ENCODE measurements at regions of chrX and their contacts with region 1.

Region 1: DNA sequence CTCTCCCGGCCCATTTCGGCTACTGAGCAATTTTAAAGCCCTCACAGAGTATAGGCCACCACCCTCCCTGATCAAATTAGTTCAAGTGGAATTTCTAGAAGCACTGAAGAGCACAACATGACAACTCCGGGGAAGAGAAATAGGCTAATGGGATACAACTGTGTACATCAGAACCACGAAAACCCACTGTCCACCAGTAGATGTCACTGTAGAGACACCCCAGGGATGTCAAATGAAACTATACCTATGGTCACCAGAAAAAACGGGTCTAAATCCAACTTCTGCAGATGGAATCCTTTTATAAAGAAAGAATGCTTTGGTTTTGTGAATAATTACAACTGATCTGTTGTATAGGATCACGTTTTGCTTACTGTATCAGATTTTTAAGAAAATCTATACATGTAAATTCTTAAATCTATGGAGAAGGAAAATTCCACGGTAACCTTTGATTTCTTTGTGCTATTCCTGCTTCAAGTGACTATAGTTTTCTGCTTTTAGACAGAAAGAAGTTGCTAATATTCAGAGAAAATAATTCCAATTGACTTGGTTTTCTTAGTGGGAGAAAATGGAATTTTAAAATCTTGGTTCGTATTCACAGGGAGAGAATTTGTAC is 29.5 kb upstream of the MAP3K15 start:
- DNase-seq: no peak
- ATAC-seq: peak; percentile 72

Region 2: DNA sequence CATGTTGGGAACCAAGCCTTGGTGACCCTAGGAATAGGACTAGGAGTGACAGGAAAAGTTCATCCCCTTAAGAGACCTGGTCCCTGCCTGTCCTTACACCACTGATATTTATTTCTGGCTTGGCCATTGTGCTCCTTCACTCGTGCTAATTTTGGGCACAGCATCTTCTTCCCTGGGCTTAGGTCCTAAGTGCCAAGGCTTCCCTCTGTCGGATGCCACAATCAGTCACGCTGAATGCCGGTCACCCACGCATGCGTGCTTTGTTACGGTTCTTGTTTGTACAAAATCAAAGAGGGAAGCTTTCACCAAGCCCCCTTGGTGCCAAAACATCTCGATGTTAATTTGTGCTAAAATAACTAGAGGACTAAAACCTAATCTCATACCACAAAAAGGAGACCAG is 12.1 kb before region 1 on chrX:
- intact Hi-C with region 1: no loop called
- DNase-seq: no peak
- ATAC-seq: no peak

Region 3: DNA sequence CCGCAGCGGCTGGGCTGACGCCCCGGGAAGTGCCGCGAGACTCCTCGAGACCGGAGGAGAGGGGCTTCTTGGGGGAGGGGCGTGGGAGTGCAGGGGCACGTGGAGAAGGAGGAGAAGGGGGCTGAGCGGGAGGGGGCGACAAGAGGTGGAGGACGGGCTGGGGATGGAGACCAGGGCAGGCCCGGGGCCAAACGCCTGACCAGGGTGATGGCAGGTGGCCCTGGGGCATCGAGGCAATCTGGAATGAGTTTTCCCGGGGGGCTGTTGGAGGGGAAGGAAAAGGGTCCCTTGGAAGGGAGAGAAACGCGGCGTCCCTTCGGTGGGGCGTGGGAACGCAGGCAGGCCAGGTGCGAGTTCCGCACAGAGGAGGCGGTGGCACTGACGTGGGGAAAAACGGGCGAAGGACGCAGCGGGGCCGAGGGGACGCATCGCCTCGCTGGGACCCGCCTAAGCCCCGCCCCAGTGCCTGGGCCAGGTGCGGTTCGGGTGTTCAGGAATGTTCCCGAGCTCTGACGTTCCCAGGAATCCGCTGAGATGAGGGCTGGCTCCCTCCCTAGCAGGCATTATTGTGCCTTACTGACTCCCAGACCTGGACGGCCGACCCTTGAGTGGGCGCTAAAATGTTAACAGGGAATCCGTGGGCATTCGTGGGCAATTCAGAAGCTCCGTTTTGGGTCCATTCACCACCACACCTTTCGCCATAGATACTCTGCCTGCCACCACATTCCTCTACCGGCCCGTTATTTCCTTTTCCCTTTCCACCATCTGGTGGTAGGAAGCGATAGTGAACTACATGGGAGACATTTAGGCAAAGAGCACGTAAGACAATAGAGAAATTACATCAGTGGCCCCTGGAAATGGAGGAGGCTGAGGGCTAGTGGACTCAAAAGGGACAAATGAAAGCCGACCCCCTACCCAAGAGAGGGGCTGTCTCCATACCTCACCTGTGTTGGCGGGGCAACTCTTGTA is 343.4 kb after region 1 on chrX:
- intact Hi-C with region 1: loop called (anchors 10 kb)
- DNase-seq: peak; percentile 73
- ATAC-seq: peak; percentile 89